Mammary epithelial cell (primary cell): ENCODE measurements at regions of chr1 and their contacts with region 1.

Region 1: DNA sequence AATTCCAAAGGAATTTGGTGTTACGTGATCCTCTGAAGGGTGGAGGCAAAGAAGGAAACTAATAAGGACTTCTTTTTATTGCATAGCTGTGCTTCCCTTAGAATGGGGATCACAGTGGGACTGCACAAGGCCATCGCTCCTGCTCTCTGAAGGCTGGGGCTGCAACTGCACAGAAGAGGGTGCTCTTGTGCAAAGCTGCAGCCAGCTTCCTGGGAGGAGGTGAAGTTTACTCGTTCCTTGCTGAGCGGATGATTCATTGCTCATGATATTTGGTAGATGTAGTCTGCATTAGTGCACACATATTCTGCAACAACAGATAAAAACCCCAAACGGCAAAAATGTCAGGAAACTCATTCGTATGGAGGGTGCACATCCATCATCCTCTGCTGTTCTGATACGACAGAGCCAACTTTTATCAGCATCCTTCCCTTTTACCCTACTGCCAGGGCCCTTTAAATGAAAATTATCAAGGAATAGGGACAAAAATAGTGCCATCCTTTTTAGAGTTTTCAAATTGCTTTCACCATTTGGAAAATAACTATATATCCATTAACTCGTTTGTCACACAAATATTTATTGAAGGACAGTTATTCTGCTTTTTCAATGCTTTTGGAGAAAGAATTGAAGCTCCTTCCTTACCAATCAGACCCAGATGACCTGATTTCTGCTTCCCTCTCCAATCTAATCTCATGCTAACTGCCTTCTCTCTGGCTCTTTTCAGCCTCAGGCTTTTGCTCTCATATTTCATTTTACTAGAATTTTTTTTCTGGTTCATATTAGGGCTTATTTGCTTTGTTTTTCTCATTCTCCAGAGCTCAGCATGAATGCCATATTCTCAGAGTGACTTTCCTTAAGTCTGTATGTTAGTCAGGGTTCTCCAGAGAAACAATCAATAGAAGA is 263.6 kb downstream of the DUSP10 start:
- DNase-seq: peak; percentile 79
- H3K4me3 ChIP-seq: no peak overlapping the region
- H3K27ac ChIP-seq: no peak overlapping the region
- H3K4me1 ChIP-seq: peaks cover 13% of the 10 kb centered on the region
- H3K27me3 ChIP-seq: no peaks in the 10 kb centered on the region
- CTCF ChIP-seq: peak; percentile 88 to 98

Region 2: DNA sequence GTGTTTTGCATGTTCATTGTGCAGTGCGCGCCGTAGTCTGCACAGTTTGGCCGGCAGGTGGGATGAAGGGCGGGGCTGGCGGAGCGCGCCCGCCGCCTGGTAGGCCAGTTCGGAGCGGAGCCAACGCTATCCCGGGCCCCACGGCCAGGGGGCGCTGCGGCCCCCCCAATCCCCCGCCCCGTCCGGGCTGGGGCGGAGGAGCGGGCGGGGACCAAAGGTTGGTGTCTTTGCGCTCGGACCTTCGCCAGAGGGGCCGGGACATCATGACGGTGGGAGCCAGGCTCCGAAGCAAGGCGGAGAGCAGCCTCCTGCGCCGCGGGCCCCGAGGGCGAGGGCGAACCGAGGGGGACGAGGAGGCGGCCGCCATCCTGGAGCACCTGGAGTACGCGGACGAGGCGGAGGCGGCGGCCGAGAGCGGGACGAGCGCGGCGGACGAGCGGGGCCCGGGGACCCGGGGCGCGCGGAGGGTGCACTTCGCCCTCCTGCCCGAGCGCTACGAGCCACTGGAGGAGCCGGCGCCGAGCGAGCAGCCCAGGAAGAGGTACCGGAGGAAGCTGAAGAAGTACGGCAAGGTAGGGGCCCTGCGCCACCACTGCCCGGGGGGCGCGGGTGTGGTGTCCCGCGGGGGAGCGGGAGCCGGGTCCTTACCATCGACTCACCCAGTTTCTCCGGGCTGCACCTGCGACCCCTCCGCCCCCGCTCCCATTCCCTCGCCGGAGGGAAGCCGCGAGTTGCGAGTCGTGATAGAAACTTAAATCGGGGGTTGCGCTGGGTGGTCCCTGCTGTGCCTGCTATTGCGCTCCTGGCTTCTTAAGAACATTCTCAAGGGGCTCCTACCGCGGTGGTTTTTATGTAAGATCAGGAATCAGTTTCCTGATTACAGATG is 787.9 kb before region 1 on chr1 and contains the start of gene C1orf115:
- CTCF ChIA-PET with region 1: no interaction called
- dilution Hi-C with region 1: no loop called
- in situ Hi-C with region 1: no loop called
- intact Hi-C with region 1: no loop called
- DNase-seq: peak; percentile 70
- H3K4me3 ChIP-seq: peak within 1 kb of the TSS; percentile 40 to 72 (median 62)
- H3K27ac ChIP-seq: no peak within 1 kb of the TSS
- H3K4me1 ChIP-seq: no peaks in the 10 kb centered on the region
- H3K27me3 ChIP-seq: no peaks in the 10 kb centered on the region
- CTCF ChIP-seq: peak; percentile 64 to 98
- total RNA-seq, gene C1orf115: 0.83 to 1.3 TPM

Region 3: DNA sequence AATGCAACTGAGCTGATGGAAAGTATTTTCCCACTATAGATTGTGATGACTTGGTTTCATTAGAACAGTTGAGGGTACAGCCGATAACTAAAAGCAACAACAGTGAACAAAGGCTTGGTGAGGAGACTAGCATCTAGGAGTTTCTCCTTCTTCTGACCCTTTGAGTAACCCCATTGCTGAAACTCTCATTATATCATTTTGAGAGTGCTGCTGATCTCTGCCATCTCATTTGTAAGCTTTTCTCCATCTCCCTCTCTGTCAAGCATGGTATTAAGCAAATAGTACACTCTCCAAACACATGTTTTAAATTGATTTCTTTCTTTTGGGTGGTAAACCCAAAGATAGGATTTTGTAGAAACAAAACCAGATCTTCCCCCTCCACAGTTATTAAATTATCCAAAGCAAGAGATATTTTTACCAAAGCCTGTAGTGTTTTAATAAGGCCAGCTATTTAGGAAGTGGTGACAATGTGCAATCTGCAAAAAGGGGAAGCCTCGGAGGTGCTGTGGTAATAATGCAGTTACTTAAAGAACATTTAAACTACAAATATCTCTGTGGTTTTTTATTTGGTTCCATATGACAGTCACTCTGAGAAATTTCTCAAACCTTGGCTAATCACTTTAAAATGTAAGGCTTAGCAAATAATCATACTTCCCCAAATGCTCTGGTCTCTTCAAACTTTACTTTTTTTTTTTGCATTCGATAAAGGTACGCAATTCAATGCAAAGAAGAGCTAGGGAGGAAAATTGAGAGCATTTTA is 311.6 kb before region 1 on chr1:
- CTCF ChIA-PET with region 1: no interaction called
- dilution Hi-C with region 1: no loop called
- in situ Hi-C with region 1: no loop called
- intact Hi-C with region 1: no loop called
- DNase-seq: no peak
- H3K4me3 ChIP-seq: no peak overlapping the region
- H3K27ac ChIP-seq: no peak overlapping the region
- H3K4me1 ChIP-seq: no peaks in the 10 kb centered on the region
- H3K27me3 ChIP-seq: peaks cover 3% of the 10 kb centered on the region
- CTCF ChIP-seq: no peak

Region 4: GRCh38 chr1:221543529-221544120 is 65.3 kb after region 1 on chr1:
- CTCF ChIA-PET with region 1: interaction called, 7 read pairs
- dilution Hi-C with region 1: no loop called
- in situ Hi-C with region 1: no loop called
- intact Hi-C with region 1: loop called (anchors 2 kb)
- DNase-seq: peak; percentile 25
- H3K4me3 ChIP-seq: no peak overlapping the region
- H3K27ac ChIP-seq: no peak overlapping the region
- H3K4me1 ChIP-seq: peaks cover 13% of the 10 kb centered on the region
- H3K27me3 ChIP-seq: no peaks in the 10 kb centered on the region
- CTCF ChIP-seq: peak; percentile 37 to 68

Region 5: GRCh38 chr1:221725735-221726672 is 247.7 kb after region 1 on chr1:
- CTCF ChIA-PET with region 1: no interaction called
- dilution Hi-C with region 1: no loop called
- in situ Hi-C with region 1: loop called in 1 of 2 experiments (anchors 25 kb)
- intact Hi-C with region 1: loop called (anchors 5 kb)
- DNase-seq: no peak
- H3K4me3 ChIP-seq: no peak overlapping the region
- H3K27ac ChIP-seq: peak overlapping the region; percentile 62
- H3K4me1 ChIP-seq: peaks cover 63% of the 10 kb centered on the region
- H3K27me3 ChIP-seq: no peaks in the 10 kb centered on the region
- CTCF ChIP-seq: no peak

Region 6: DNA sequence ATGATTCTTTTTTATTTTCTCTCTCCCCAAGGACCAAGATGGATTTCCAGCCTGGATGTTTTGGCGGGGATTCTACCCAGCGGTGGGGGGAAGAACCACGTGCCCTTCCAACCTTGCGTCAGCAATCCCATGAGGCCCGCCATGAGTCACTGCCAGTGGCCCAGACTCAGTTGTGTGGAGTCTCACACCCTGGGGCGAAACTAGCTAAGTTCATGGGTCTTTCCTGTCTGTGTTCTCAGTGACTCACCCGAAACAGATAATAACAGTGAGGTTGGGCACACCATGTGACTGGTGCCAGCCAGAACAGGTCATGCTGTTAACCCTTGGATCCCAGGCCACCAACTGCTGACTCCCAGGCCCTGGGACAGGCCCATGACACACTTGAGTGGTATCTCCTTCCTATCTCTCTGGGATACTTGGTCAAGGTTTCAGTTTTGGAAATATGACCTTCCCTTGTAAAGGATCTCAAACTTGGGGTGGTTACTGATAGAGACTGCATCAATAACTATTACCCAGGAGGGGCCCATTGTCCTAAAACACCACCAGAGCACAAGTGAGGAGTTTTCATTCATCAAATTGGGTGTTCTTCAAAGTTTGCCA is 361.6 kb after region 1 on chr1:
- CTCF ChIA-PET with region 1: no interaction called
- dilution Hi-C with region 1: no loop called
- in situ Hi-C with region 1: no loop called
- intact Hi-C with region 1: loop called (anchors 5 kb)
- DNase-seq: peak; percentile 100
- H3K4me3 ChIP-seq: no peak overlapping the region
- H3K27ac ChIP-seq: peak overlapping the region; percentile 97
- H3K4me1 ChIP-seq: peaks cover 31% of the 10 kb centered on the region
- H3K27me3 ChIP-seq: no peaks in the 10 kb centered on the region
- CTCF ChIP-seq: no peak

Region 7: DNA sequence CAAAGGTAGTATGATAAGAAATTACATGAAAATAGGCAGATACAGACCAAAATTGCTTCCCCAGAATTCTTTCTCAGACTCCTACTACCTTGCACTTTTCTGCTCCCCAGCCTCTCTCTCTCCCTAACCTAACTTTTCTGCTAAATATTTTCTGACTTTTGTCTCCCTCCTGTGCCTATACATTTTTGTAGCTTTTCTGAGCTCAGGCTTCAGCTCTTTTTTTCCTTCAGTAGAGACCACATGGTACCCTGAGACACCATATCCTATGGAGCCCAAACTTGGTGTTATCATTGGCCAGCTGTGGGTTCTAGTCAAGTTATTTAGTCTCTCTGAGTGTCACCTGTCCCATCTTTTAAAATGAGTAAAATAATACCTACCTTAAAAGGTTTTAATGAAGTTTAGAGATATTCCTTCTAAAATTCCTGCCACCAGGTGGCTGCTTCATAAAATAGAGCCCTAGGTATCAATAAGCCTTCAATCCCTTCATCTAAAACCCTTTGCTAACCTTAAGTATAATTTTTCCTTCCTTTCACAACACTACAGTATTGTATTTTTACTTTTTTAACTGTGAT is 501.2 kb after region 1 on chr1:
- CTCF ChIA-PET with region 1: no interaction called
- dilution Hi-C with region 1: no loop called
- in situ Hi-C with region 1: no loop called
- intact Hi-C with region 1: loop called (anchors 1 kb)
- DNase-seq: no peak
- H3K4me3 ChIP-seq: no peak overlapping the region
- H3K27ac ChIP-seq: no peak overlapping the region
- H3K4me1 ChIP-seq: peaks cover 14% of the 10 kb centered on the region
- H3K27me3 ChIP-seq: no peaks in the 10 kb centered on the region
- CTCF ChIP-seq: peak; percentile 36 to 41